ENCODE measurements at regions of chr14 and their contacts with region 1.

Region 1: GRCh38 chr14:54329082-54329695 is 67.6 kb upstream of the CDKN3 start:
- DNase-seq: peak; percentile 61
- ATAC-seq: peak; percentile 99
- H3K4me3 ChIP-seq: no peak overlapping the region
- H3K27ac ChIP-seq: no peak overlapping the region
- H3K4me1 ChIP-seq: no peaks in the 10 kb centered on the region
- H3K27me3 ChIP-seq: peaks cover 12% of the 10 kb centered on the region
- CTCF ChIP-seq: peak; percentile 79
- POLR2A ChIP-seq: no peak
- RAD21 ChIP-seq: peak; percentile 86

Region 2: GRCh38 chr14:53432378-53432802 is 896.8 kb before region 1 on chr14:
- CTCF ChIA-PET with region 1: no interaction called
- POLR2A ChIA-PET with region 1: no interaction called
- dilution Hi-C with region 1: no loop called
- in situ Hi-C with region 1: loop called (anchors 25 kb)
- intact Hi-C with region 1: no loop called
- DNase-seq: peak; percentile 60
- ATAC-seq: peak; percentile 94
- H3K4me3 ChIP-seq: no peak overlapping the region
- H3K27ac ChIP-seq: peak overlapping the region; percentile 3; the same call in 1 of the 2 replicates
- H3K4me1 ChIP-seq: peaks cover 6% of the 10 kb centered on the region
- H3K27me3 ChIP-seq: no peaks in the 10 kb centered on the region
- CTCF ChIP-seq: peak; percentile 71
- POLR2A ChIP-seq: no peak
- RAD21 ChIP-seq: peak; percentile 83

Region 3: DNA sequence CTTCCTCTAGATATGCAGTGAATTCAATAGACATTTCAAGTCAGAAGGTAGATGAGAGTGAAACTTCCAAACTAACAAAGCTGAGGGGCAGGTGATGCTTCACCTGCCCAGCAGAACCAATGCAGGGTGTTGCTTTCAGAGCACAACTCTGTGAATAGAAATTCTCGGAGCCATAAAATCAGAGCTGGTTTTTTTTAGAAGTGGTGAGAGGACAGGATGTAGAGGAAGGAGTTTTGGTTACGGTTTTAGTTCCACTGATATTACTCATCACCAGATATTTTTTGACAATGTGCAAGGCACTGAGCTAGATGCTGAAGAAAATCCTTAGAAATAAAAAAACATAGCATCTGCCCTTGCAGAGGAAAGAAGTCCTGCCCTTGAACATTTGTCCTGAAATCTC is 434.7 kb before region 1 on chr14:
- CTCF ChIA-PET with region 1: no interaction called
- POLR2A ChIA-PET with region 1: no interaction called
- dilution Hi-C with region 1: no loop called
- in situ Hi-C with region 1: no loop called
- intact Hi-C with region 1: loop called (anchors 5 kb)
- DNase-seq: peak; percentile 79
- ATAC-seq: peak; percentile 85
- H3K4me3 ChIP-seq: no peak overlapping the region
- H3K27ac ChIP-seq: peak overlapping the region; percentile 81
- H3K4me1 ChIP-seq: peaks cover 23% of the 10 kb centered on the region
- H3K27me3 ChIP-seq: no peaks in the 10 kb centered on the region
- CTCF ChIP-seq: no peak
- POLR2A ChIP-seq: no peak
- RAD21 ChIP-seq: no peak

Region 4: DNA sequence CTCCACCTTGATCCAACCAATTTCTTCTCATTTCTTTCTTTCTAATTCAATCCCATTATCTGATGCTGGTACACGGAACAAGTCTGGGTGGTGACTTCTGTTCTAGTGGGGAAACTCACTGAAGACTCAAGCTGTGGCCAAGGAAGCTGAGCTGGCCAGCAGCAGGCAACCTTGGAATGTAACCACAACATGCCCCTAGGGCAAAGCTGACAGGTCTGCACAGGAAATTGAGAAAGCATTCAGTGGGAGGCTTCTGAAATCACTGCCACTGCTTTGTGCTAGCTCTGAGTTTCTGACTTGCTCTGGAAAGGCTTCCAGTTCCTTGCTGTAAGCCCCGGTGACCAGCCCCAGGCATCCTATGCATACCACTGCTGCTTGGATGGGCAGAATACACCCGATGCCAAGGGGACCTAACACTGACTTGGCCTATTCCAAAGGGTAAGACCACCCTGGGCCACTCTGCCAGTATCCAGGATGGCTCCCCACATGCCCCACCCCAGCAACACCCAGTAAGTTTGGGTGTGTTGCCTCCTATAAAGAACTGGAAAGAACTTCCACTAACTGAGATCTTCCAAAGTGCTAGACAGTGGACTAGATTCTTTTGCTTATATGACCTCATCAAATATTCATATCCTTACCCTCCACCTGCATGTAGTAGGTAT is 16.9 kb before region 1 on chr14:
- CTCF ChIA-PET with region 1: interaction called, 12 read pairs
- POLR2A ChIA-PET with region 1: no interaction called
- dilution Hi-C with region 1: no loop called
- in situ Hi-C with region 1: no loop called
- intact Hi-C with region 1: no loop called
- DNase-seq: peak; percentile 85
- ATAC-seq: peak; percentile 91
- H3K4me3 ChIP-seq: no peak overlapping the region
- H3K27ac ChIP-seq: no peak overlapping the region
- H3K4me1 ChIP-seq: peaks cover 2% of the 10 kb centered on the region; the same call in 1 of the 2 replicates
- H3K27me3 ChIP-seq: peaks cover 7% of the 10 kb centered on the region
- CTCF ChIP-seq: no peak
- POLR2A ChIP-seq: no peak
- RAD21 ChIP-seq: 0 out of 2 replicates have a peak, but pooled peaks have one; percentile 10

Region 5: DNA sequence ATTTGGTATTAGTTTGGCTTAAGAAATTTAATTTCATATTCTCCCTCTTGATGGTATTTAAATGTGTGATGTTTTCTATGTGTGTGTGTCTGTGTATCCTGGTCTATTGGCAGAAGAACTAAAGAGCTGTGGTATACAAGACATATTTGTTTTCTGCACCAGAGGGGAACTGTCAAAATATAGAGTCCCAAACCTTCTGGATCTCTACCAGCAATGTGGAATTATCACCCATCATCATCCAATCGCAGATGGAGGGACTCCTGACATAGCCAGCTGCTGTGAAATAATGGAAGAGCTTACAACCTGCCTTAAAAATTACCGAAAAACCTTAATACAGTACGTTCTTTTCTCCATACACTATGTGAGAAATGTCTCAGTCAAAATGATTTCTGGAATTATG is 82.2 kb after region 1 on chr14:
- CTCF ChIA-PET with region 1: no interaction called
- POLR2A ChIA-PET with region 1: no interaction called
- dilution Hi-C with region 1: no loop called
- in situ Hi-C with region 1: no loop called
- intact Hi-C with region 1: no loop called
- DNase-seq: no peak
- ATAC-seq: no peak
- H3K4me3 ChIP-seq: no peak overlapping the region
- H3K27ac ChIP-seq: no peak overlapping the region
- H3K4me1 ChIP-seq: no peaks in the 10 kb centered on the region
- H3K27me3 ChIP-seq: no peaks in the 10 kb centered on the region
- CTCF ChIP-seq: no peak
- POLR2A ChIP-seq: no peak
- RAD21 ChIP-seq: no peak

Measured in IMR-90 (cell line).